ENCODE measurements at regions of chr1 and their contacts with region 1.

Region 1: GRCh38 chr1:207963427-207964194 is 52.7 kb upstream of the CD34 start:
- DNase-seq: peak; percentile 76 to 90 (median 90)
- H3K4me3 ChIP-seq: peak overlapping the region; percentile 11 to 76 (median 68)
- H3K27ac ChIP-seq: peak overlapping the region; percentile 40 to 80
- H3K4me1 ChIP-seq: peaks cover 4 to 47% (median 30%) of the 10 kb centered on the region in 4 experiments
- H3K27me3 ChIP-seq: no peaks in the 10 kb centered on the region

Region 2: DNA sequence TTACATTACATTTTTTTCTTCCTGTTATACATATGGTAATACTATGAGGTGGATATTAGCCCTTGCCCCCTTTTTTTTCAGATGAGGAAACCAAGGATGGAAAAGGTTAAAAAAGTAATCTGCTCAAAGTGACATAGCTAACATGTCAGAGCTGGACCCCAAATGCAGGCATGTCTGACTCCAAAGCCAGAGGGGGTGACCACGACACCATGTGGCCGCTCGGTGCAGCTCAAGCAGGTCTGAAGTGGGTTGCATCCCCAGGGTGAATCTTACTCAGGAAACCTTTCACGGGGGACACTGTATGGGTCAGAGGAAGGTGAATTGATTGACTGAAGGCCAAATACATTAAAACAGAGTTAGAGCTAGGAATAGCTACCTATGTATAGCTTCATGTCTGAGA is 87.5 kb before region 1 on chr1:
- CTCF ChIA-PET with region 1: interaction called, 17 read pairs
- POLR2A ChIA-PET with region 1: interaction called, 4 read pairs
- DNase-seq: no peak
- H3K4me3 ChIP-seq: no peak overlapping the region
- H3K27ac ChIP-seq: no peak overlapping the region
- H3K4me1 ChIP-seq: peaks cover 26 to 60% (median 46%) of the 10 kb centered on the region in 4 experiments
- H3K27me3 ChIP-seq: no peaks in the 10 kb centered on the region

Region 3: GRCh38 chr1:207897188-207897587 is 66.4 kb before region 1 on chr1:
- CTCF ChIA-PET with region 1: interaction called, 494 read pairs
- POLR2A ChIA-PET with region 1: interaction called, 6 read pairs
- DNase-seq: peak; percentile 51 to 65 (median 61)
- H3K4me3 ChIP-seq: no peak overlapping the region
- H3K27ac ChIP-seq: peak overlapping the region in 1 of 2 experiments; percentile 5
- H3K4me1 ChIP-seq: peaks cover 13 to 75% (median 46%) of the 10 kb centered on the region in 4 experiments
- H3K27me3 ChIP-seq: no peaks in the 10 kb centered on the region

Region 4: GRCh38 chr1:207925210-207925609 is 38.4 kb before region 1 on chr1:
- CTCF ChIA-PET with region 1: interaction called, 73 read pairs
- POLR2A ChIA-PET with region 1: interaction called, 12 read pairs
- DNase-seq: no peak
- H3K4me3 ChIP-seq: no peak overlapping the region
- H3K27ac ChIP-seq: peak overlapping the region in 1 of 2 experiments; percentile 15
- H3K4me1 ChIP-seq: peaks cover 28 to 65% (median 54%) of the 10 kb centered on the region in 4 experiments
- H3K27me3 ChIP-seq: no peaks in the 10 kb centered on the region

Region 5: DNA sequence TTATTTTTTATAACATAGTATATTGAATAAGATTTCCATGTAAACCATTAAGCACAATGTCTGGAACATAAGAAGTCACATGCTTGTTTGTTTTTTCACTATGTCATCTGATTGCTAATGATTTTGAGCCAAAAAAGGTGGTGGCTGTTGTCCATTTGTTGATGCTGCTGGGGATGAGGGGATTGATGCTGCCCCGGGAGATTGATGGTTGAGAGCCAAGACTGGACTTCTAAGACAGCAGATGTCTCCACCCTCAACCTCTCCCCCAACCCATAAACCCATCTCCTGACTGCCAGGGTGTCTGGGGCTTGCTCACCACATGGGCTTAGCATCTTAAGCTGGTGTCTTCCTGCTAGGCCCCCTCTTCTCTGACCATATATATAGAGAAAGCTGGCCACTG is 16.9 kb before region 1 on chr1:
- CTCF ChIA-PET with region 1: interaction called, 12 read pairs
- POLR2A ChIA-PET with region 1: no interaction called
- DNase-seq: no peak
- H3K4me3 ChIP-seq: no peak overlapping the region
- H3K27ac ChIP-seq: no peak overlapping the region
- H3K4me1 ChIP-seq: peaks cover 2 to 12% (median 8%) of the 10 kb centered on the region in 4 experiments
- H3K27me3 ChIP-seq: no peaks in the 10 kb centered on the region

Region 6: GRCh38 chr1:208137193-208137592 is 173.6 kb after region 1 on chr1:
- CTCF ChIA-PET with region 1: no interaction called
- POLR2A ChIA-PET with region 1: no interaction called
- DNase-seq: no peak
- H3K4me3 ChIP-seq: no peak overlapping the region
- H3K27ac ChIP-seq: no peak overlapping the region
- H3K4me1 ChIP-seq: peaks cover 0 to under 1% (median under 1%) of the 10 kb centered on the region in 4 experiments
- H3K27me3 ChIP-seq: peaks cover 0 to 2% (median 0%) of the 10 kb centered on the region in 5 experiments